Activated CD8-positive, alpha-beta memory T cell treated with anti-CD3 and anti-CD28 coated beads, Interleukin-2, amount 10 ng/mL, durations not matched to agents 7 days and 5 days (primary cell): ENCODE measurements at regions of chr1 and their contacts with region 1.

Region 1: DNA sequence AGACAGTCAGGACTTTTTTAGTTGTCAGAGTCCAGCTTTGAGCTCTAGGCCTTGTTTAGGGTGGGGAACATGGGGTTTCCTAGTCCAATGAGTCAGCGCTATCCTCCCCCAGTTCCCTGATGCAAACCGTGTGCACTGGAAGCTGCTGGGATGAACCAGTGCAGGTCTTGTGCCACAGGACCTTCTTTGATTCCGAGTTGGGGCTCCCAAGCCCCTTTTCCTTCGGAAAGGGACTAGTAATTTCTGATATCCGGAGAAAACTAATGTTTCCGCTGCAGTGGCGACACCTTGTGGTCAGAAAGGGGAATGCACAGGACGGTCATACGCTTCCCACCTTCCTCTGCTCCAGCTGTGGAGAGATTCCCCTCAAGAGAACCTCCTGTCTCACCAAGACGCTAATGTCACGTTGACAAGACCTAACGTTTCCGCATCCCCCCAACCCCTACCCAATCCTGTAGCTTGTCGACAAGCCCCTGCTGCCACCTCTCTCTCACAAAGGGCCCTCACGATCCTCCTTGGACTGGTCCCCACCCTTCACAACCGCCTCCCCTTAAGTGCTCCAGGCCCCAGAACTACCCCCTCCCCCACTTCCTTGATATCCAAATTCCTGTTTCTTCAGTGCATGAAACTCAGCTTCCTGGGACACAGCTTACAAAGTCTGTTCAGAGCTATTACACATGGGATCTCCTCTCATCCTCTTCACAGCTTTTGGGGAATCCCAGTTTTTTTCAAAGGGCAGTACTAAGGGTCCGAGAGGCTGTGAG is 30.9 kb downstream of the GPA33 start:
- DNase-seq: peak; percentile 81
- ATAC-seq: peak; percentile 40
- H3K4me3 Mint-ChIP-seq: no peak overlapping the region
- H3K27ac Mint-ChIP-seq: peak overlapping the region; percentile 33
- H3K4me1 Mint-ChIP-seq: peaks cover 27% of the 10 kb centered on the region
- H3K27me3 Mint-ChIP-seq: no peaks in the 10 kb centered on the region

Region 2: DNA sequence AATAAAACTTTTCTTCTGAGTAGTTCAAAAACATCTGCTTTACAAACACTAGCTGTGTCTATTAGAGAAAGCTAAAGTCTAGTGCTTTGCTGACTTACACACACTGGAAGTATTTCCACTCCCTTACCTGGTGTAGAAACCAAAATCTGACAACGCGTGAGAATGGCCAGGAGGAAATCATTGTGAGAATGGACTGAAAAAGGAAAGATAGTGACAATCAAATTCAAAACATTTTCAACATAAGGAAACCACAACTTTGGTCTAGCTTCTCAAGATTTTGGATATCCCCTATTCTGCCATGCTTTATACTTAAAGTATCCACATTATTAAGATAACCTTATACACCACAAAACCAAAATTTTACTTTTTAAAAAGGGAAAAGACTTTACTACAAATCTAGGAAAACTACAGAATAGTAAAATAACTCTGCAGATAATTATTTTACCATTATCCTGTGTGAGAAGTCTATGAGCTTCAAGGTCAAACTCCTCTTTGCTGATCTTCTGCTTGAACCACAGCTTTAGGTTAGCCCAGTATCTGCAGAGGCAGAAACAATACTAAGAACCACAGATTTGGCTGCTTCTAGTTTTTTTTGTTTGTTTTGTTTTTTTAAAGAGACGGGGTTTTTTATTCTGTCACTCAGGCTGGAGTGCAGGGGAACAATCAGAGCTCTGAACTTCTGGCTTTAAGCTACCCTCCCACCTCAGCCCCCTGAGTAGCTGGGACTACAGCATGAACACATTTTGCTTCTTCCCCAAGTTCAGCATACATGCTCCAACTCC is 189.7 kb before region 1 on chr1:
- CTCF ChIA-PET with region 1: interaction called, 222 read pairs
- DNase-seq: no peak
- ATAC-seq: peak; percentile 42
- H3K4me3 Mint-ChIP-seq: no peak overlapping the region
- H3K27ac Mint-ChIP-seq: peak overlapping the region; percentile 74
- H3K4me1 Mint-ChIP-seq: peaks cover 50% of the 10 kb centered on the region
- H3K27me3 Mint-ChIP-seq: no peaks in the 10 kb centered on the region

Region 3: GRCh38 chr1:166999500-167000055 is 59.6 kb before region 1 on chr1:
- CTCF ChIA-PET with region 1: no interaction called
- DNase-seq: no peak
- ATAC-seq: no peak
- H3K4me3 Mint-ChIP-seq: no peak overlapping the region
- H3K27ac Mint-ChIP-seq: no peak overlapping the region
- H3K4me1 Mint-ChIP-seq: peaks cover 3% of the 10 kb centered on the region
- H3K27me3 Mint-ChIP-seq: peaks cover 31% of the 10 kb centered on the region

Region 4: DNA sequence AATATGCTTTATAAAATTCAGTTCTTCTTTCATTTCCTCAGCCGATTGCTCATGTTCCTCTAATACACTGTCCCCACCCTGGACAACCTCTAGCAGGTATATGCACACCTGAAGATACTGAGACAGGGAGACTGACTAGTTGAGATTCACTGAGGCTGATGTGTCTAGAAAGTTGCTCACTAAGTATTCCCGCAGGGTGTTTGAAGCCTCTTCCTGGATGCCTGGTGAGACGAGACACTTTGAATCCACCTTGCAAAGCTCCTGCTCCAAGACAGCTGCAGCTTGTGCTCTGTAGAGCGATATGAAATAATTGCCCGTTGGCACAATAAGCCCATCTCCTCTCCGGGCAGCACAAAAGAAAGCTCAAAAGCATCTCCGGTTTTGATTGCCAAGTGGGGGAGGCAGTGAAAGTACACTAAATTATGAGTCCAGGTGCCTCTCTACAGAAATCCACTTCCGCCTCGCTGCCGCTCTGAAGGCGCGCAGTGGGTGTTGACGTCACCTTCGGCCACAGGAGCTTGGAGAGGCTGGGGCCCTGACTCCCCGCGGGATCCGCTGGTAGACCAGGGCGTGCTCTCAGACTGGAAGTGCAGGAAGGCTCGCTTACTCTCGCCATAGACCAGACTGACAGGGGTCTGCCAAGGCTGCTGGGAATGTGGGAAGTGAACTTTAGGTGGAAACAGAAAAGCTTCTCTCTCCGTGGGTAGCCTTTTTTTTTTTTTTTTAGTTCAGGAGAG is 15.3 kb before region 1 on chr1:
- CTCF ChIA-PET with region 1: interaction called, 39 read pairs
- DNase-seq: peak; percentile 90
- ATAC-seq: peak; percentile 100
- H3K4me3 Mint-ChIP-seq: peak overlapping the region; percentile 74
- H3K27ac Mint-ChIP-seq: peak overlapping the region; percentile 67
- H3K4me1 Mint-ChIP-seq: peaks cover 13% of the 10 kb centered on the region
- H3K27me3 Mint-ChIP-seq: peaks cover 56% of the 10 kb centered on the region

Region 5: GRCh38 chr1:167553136-167554027 is 494.2 kb after region 1 on chr1 and contains the start of gene CREG1:
- CTCF ChIA-PET with region 1: interaction called, 11 read pairs
- DNase-seq: peak; percentile 92
- ATAC-seq: peak; percentile 100
- H3K4me3 Mint-ChIP-seq: peak within 1 kb of the TSS; percentile 77
- H3K27ac Mint-ChIP-seq: peak within 1 kb of the TSS; percentile 62
- H3K4me1 Mint-ChIP-seq: peaks cover 37% of the 10 kb centered on the region
- H3K27me3 Mint-ChIP-seq: peaks cover 4% of the 10 kb centered on the region
- total RNA-seq, gene CREG1: 12.7 to 15.8 TPM